ENCODE measurements at regions of chr12 and their contacts with region 1.

Region 1: DNA sequence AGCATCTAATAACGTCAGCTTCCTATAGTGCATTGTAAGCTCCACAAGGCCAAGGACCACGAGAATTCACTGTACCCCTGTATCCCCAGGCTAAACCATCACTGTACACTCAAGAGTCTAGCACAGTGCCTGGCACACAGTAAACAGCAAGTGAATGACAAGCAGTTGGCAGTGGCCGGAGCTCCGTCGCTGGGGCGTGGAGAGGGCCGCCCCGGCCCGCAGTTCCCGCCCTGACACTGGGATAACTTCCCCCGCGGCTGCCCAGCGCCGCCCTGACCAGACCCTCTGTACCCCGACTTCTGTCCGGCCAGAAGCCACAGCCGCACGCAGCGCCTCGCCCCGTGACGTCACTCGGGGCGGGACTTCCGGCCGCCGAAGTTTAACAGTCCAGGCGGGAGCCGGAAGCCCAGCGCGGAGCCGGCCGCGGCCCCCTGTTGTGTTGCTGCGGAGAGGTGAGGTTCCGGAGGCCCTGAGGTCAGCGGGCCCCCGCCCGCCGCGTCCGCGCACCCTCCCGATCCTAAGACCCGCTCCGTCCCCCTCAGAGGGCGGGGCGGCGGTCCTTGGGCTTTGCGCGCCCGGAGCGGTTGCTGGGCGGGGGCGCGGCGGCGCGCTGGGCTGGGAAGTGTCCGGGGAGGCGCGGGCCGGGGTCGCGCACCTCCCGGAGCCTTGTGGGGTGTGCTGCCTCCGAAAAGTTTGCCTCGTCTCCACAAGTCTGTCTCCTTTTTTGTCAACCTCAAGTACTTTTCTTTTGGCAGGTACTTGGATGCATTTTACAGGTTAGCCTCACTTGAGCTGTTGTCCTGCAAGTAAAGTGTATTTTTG is at the start of gene NEDD1:
- DNase-seq: peak; percentile 18 to 92
- H3K4me3 ChIP-seq: peak within 1 kb of the TSS; percentile 81 to 89
- H3K27ac ChIP-seq: peak within 1 kb of the TSS; percentile 66 to 82
- H3K4me1 ChIP-seq: peaks cover 0 to 3% of the 10 kb centered on the region in 2 donors
- H3K27me3 ChIP-seq: no peaks in the 10 kb centered on the region
- CTCF ChIP-seq: no peak
- total RNA-seq, gene NEDD1: 31.1 TPM

Region 2: GRCh38 chr12:96237465-96238077 is 669.5 kb before region 1 on chr12:
- intact Hi-C with region 1: loop called (anchors 5 kb)
- DNase-seq: peak in 1 of 2 donors; percentile 90
- H3K4me3 ChIP-seq: peak overlapping the region in 1 of 2 donors; percentile 12
- H3K27ac ChIP-seq: peak overlapping the region; percentile 69 to 78
- H3K4me1 ChIP-seq: peaks cover 25 to 39% of the 10 kb centered on the region in 2 donors
- H3K27me3 ChIP-seq: no peaks in the 10 kb centered on the region
- CTCF ChIP-seq: no peak

Measured in ascending aorta (tissue), 2 donors.